Transverse colon (tissue), 4 donors: ENCODE measurements at regions of chr12 and their contacts with region 1.

Region 1: DNA sequence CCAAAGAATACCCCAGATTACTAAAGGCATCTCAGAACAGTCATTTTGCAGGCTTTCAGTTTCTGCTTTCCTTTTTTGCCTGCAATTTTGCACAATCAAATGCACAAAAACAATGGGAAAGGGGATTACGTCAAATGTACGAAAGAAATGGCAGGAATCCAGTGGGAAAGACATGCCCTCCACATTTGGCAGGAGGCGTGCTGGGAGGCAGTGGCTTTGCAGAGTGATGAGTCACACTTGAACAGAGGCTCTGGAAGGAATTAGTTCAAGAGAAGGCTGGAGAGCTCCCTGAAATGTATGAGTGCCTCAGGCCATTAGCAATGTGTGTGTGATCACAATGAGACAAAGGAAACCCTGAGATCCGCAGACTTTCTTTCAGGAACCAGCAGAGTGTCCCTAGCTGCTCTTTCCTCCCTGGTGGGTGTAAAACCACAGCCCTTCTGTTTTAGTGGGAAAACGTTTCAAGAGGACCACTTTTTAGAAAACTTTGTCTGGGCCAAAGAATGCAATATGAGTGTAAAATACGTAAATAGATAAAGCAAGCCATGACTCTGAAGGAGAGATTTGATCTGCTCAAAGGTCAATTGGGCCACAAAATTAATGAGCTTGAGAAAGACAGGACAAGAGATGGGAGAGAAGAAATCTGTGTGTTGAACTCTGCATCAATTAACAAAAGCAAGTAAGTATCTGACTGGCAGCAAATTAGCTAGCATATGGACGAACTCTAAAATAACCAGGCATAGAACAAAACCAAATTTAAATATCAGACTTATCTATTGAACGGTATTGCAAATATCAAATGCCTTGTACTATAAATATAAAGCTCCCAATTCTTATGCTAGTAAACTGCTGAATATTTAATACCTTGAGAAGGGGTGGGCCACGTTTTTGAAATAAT is 155.4 kb upstream of the PDE3A start:
- DNase-seq: peak; percentile 65
- H3K4me3 ChIP-seq: no peak overlapping the region
- H3K27ac ChIP-seq: peak overlapping the region; percentile 46 to 80 (median 77)
- H3K4me1 ChIP-seq: peaks cover 10 to 37% (median 20%) of the 10 kb centered on the region in 4 donors
- H3K27me3 ChIP-seq: no peaks in the 10 kb centered on the region
- CTCF ChIP-seq: no peak
- EP300 ChIP-seq: no peak
- POLR2A ChIP-seq: no peak

Region 2: GRCh38 chr12:20142956-20143355 is 70.0 kb before region 1 on chr12:
- in situ Hi-C with region 1: no loop called
- intact Hi-C with region 1: loop called (anchors 10 kb)
- DNase-seq: no peak
- H3K4me3 ChIP-seq: no peak overlapping the region
- H3K27ac ChIP-seq: no peak overlapping the region
- H3K4me1 ChIP-seq: peaks cover 0 to 5% (median under 1%) of the 10 kb centered on the region in 4 donors
- H3K27me3 ChIP-seq: no peaks in the 10 kb centered on the region
- CTCF ChIP-seq: no peak
- EP300 ChIP-seq: no peak
- POLR2A ChIP-seq: no peak

Region 3: DNA sequence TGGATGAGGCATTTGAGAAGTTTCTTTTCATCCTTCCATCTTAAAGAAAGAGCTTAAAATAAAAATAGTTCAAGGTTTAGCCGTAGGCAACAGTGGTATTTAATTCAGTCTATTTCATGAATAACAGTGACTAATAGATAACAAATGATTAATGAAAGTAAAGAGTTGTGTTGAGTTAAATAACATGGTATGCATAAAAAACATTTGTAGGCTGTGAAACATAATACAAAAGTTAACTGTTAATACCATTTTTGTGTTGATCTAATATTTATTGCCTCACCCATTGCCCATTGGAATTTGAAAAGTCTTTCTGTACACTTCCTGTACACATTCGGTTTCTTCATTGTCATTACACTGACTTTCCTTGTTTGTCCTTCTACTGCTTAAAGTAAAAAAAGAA is 46.9 kb after region 1 on chr12:
- in situ Hi-C with region 1: no loop called
- intact Hi-C with region 1: no loop called
- DNase-seq: no peak
- H3K4me3 ChIP-seq: no peak overlapping the region
- H3K27ac ChIP-seq: no peak overlapping the region
- H3K4me1 ChIP-seq: no peaks in the 10 kb centered on the region
- H3K27me3 ChIP-seq: no peaks in the 10 kb centered on the region
- CTCF ChIP-seq: no peak
- EP300 ChIP-seq: no peak
- POLR2A ChIP-seq: no peak